Dorsolateral prefrontal cortex (tissue), 120 donors: ENCODE measurements at regions of chr1 and their contacts with region 1.

Region 1: GRCh38 chr1:110524311-110525251 is 5.6 kb upstream of the KCNA10 start:
- DNase-seq: peak; percentile 40 to 79 (median 56)
- H3K4me3 ChIP-seq: peak overlapping the region in 47 of 59 donors; percentile 9 to 61 (median 41)
- H3K27ac ChIP-seq: peak overlapping the region in 4 of 59 donors; percentile 21 to 44 (median 32)
- H3K27me3 ChIP-seq: peaks cover 0 to 27% (median 0%) of the 10 kb centered on the region in 45 donors
- CTCF ChIP-seq: peak; percentile 56 to 95 (median 86)

Region 2: DNA sequence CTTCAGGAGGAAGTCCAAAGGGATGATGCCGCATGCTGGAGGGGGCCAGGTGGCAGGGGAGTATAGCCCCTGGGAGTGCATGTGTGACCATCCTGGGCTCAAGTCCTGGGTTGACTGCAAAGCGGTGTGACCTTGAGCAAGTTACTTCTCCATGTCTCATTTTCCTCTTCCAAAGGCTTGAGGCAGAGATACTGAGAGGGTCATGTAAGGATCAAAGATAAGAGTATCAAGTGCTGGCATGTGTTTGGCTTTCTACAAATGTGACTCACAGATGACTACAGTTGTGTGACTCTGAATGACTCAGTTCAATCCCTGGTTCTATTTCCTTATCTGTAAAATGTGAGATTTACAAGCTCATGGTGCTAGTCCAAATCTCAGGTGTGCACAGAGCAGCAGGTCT is 47.5 kb before region 1 on chr1:
- intact Hi-C with region 1: no loop called
- DNase-seq: no peak
- H3K4me3 ChIP-seq: no peak overlapping the region
- H3K27ac ChIP-seq: no peak overlapping the region
- H3K27me3 ChIP-seq: peaks cover 0 to 3% (median 0%) of the 10 kb centered on the region in 45 donors
- CTCF ChIP-seq: no peak

Region 3: GRCh38 chr1:110619412-110620249 is 95.0 kb after region 1 on chr1:
- intact Hi-C with region 1: loop called (anchors 1 to 2 kb)
- DNase-seq: peak; percentile 82 to 91 (median 89)
- H3K4me3 ChIP-seq: peak overlapping the region in 41 of 59 donors; percentile 4 to 61 (median 36)
- H3K27ac ChIP-seq: peak overlapping the region in 38 of 59 donors; percentile 8 to 76 (median 51)
- H3K27me3 ChIP-seq: peaks cover 0 to 8% (median 0%) of the 10 kb centered on the region in 45 donors
- CTCF ChIP-seq: peak; percentile 87 to 99 (median 97)